ENCODE measurements at regions of chr7 and their contacts with region 1.

Region 1: DNA sequence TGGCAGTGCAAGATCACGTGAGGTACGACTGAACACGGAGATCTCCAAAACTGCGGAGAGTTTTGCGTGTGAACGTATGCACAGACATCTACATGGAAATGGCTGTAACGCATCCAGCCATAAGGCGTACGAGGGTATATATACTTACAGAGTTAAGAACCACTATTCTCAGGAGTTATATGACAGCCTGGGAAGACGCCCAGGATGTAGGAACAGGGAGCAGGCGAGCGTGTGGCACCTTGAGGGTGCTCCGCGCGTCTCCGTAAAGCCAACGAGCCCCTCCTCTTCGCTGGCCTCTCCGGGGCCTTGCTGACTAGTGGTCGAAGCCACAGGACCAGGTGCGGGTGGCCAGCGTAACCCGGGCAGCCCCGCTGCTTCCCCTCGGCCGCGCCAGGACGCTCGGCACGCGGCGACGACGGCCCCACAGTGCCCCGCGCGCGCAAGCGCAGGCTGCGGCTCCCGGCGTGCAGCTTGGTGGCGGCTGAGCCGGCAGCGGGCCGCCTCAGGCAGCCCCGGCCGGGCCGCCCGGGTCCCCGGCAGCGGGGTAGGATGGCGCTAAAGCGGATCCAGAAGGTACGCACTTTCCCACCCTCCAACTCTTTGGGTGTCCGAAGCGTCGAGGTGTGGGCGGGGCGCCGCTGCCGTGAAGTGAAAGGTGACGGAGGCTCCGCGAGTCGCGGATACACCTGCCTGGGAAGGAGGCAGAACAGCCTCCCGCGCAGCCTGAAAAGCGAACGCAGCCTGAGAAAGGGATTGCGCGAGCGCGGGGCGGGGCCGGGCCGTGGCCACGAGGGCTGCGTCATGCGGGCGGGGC is at the start of gene UBE2D4:
- DNase-seq: peak; percentile 97
- H3K4me3 ChIP-seq: peak within 1 kb of the TSS; percentile 58 to 75
- H3K27ac ChIP-seq: peak within 1 kb of the TSS; percentile 60 to 93
- H3K4me1 ChIP-seq: peaks cover 0 to 25% of the 10 kb centered on the region in 2 experiments; a peak in 1 of 4 replicates
- H3K27me3 ChIP-seq: no peaks in the 10 kb centered on the region
- CTCF ChIP-seq: no peak
- EP300 ChIP-seq: no peak
- RAD21 ChIP-seq: no peak
- polyA plus RNA-seq, gene UBE2D4: 22.8 and 26.8 TPM in 2 replicates

Region 2: DNA sequence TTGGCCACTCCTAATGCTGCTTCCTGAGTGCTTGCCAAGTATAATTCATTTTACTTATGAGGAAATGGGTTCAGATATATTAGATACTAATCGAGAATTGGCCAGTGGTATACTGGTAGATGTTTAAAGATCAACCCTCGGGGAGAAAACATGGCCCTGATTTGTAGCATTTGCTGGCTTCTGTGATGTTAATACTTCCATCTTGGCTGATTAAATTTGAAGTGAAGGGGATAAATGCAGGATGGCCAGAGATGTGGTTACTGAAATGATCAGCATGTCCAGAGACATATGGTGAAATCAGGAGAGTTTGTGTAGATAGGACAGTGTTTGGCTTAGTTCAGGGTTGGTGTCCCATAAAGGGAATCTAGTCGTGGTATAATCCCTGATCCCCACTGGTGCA is 11.3 kb after region 1 on chr7:
- CTCF ChIA-PET with region 1: interaction called, 3 read pairs
- POLR2A ChIA-PET with region 1: interaction called, 10 read pairs
- DNase-seq: peak; percentile 78
- H3K4me3 ChIP-seq: no peak overlapping the region
- H3K27ac ChIP-seq: peak overlapping the region in 1 of 2 experiments; percentile 98; a peak in 2 of 4 replicates
- H3K4me1 ChIP-seq: peaks cover 0 to 39% of the 10 kb centered on the region in 2 experiments; a peak in 2 of 4 replicates
- H3K27me3 ChIP-seq: no peaks in the 10 kb centered on the region
- CTCF ChIP-seq: no peak
- EP300 ChIP-seq: peak in 1 of 2 experiments; percentile 100; a peak in 2 of 4 replicates
- RAD21 ChIP-seq: no peak

Measured in SK-N-SH (cell line).